ENCODE measurements at regions of chr12 and their contacts with region 1.

Region 1: GRCh38 chr12:56987551-56988053 is 18.7 kb downstream of the ZBTB39 start:
- DNase-seq: peak; percentile 55
- H3K4me3 ChIP-seq: no peak overlapping the region
- H3K27ac ChIP-seq: peak overlapping the region; percentile 3
- H3K4me1 ChIP-seq: peaks cover 30% of the 10 kb centered on the region
- H3K27me3 ChIP-seq: peaks cover 2 to 3% of the 10 kb centered on the region in 2 experiments
- CTCF ChIP-seq: peak; percentile 93
- POLR2A ChIP-seq: no peak

Region 2: GRCh38 chr12:56425193-56425592 is 562.4 kb before region 1 on chr12:
- CTCF ChIA-PET with region 1: no interaction called
- POLR2A ChIA-PET with region 1: no interaction called
- dilution Hi-C with region 1: no loop called
- intact Hi-C with region 1: no loop called
- DNase-seq: no peak
- H3K4me3 ChIP-seq: no peak overlapping the region
- H3K27ac ChIP-seq: no peak overlapping the region
- H3K4me1 ChIP-seq: no peaks in the 10 kb centered on the region
- H3K27me3 ChIP-seq: no peaks in the 10 kb centered on the region
- CTCF ChIP-seq: no peak
- POLR2A ChIP-seq: no peak

Region 3: DNA sequence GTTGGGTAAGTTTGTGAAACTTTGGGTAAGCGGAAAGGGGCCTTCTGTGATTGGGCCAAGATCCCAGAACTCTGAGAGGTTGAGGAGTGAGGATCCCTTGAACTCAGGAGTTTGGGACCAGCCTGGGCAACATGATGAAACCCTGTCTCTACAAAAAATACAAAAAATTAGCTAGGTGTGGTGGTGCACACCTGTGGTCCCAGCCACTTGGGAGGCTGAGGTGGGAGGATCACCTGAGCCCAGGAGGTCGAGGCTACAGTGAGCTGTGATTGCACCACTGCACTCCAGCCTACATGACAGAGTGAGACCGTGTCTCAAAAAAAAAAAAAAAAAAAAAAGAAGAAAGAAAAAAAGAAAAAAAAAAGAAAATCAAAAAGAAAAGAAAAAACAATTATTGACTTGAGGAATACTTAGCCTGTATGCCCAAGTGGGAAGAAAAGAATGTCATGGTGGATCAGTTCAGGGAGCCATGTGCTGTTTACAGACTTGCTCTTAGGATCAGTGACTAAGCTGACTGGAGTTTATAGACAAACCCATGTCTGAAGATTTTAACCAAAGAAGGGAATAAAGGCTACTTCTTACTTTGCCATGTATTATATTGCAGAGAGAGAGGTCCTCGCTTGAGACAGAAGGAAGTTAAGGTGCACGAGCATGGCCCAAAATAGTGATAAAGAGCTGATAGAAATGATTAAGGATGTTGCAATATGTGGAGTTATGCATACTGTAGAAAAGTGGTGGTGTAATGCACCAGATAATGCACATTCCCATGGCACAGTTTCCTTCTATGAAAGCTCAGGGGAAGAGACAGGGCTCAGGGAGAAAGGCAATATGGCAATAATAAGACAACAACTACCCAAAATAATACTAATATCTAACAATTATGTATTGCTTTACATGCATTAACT is 223.6 kb before region 1 on chr12:
- CTCF ChIA-PET with region 1: interaction called, 29 read pairs
- POLR2A ChIA-PET with region 1: no interaction called
- dilution Hi-C with region 1: no loop called
- intact Hi-C with region 1: no loop called
- DNase-seq: no peak
- H3K4me3 ChIP-seq: no peak overlapping the region
- H3K27ac ChIP-seq: no peak overlapping the region
- H3K4me1 ChIP-seq: no peaks in the 10 kb centered on the region
- H3K27me3 ChIP-seq: peaks cover 0 to 2% of the 10 kb centered on the region in 2 experiments
- CTCF ChIP-seq: no peak
- POLR2A ChIP-seq: no peak

Region 4: GRCh38 chr12:56839915-56840325 is 147.7 kb before region 1 on chr12:
- CTCF ChIA-PET with region 1: interaction called, 14 read pairs
- POLR2A ChIA-PET with region 1: no interaction called
- dilution Hi-C with region 1: no loop called
- intact Hi-C with region 1: loop called (anchors 1 kb)
- DNase-seq: peak; percentile 45
- H3K4me3 ChIP-seq: no peak overlapping the region
- H3K27ac ChIP-seq: no peak overlapping the region
- H3K4me1 ChIP-seq: no peaks in the 10 kb centered on the region
- H3K27me3 ChIP-seq: peaks cover 13 to 20% of the 10 kb centered on the region in 2 experiments
- CTCF ChIP-seq: peak; percentile 43 to 66
- POLR2A ChIP-seq: no peak